CD4-positive, alpha-beta T cell (primary cell): ENCODE measurements at regions of chr12 and their contacts with region 1.

Region 1: DNA sequence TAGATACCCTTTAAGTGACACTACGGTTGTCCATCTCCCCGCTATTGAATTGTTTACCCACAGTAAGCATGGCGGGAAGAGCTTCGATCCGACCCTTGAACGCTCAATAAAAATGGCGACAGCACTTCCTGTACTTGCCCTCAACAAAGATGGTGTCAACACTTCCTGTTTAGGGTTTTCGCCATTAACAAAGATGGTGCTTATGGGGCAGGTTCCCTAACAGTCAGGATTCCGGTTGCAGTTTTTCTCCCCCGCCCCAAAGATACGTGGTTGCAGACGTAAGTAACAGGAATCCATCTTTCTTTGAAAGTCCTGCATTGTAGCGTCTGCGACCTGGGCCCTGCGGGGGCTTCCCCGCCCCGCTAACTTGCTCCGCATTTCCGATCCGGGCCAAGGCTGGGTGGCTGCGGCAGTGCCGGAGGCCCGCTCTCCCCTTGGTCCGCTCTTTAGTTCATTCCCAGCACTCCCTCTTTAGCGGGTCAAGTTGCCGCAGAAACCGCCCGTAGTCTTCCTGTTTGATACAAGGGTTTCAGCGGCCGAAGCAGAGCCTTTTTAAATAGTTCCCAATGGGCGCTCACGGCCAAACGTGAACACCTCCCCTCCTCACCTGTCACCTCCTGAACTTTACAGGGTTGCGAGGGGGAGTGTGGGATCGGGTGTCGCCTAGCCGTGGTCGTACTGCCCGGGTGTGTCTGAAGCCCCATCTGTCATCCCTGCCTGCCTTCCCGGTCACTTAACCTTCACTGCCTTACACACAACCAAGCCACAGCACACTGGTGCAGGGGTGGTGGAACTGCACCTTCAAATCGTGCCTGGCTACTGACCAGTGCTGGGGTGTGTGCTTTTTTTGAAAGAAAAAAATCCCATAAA is at the start of gene CRADD:
- DNase-seq: peak; percentile 66 to 99 (median 80)
- ATAC-seq: peak; percentile 94
- H3K4me3 ChIP-seq: peak within 1 kb of the TSS; percentile 71
- H3K4me3 Mint-ChIP-seq: peak within 1 kb of the TSS; percentile 97
- H3K27ac ChIP-seq: peak within 1 kb of the TSS; percentile 97 to 98
- H3K27ac Mint-ChIP-seq: peak within 1 kb of the TSS; percentile 100
- H3K4me1 ChIP-seq: peaks cover 24% of the 10 kb centered on the region
- H3K4me1 Mint-ChIP-seq: peaks cover 40% of the 10 kb centered on the region
- H3K27me3 ChIP-seq: peaks cover 7 to 9% of the 10 kb centered on the region in 2 experiments
- H3K27me3 Mint-ChIP-seq: peaks cover 15% of the 10 kb centered on the region
- CTCF ChIP-seq: no peak
- total RNA-seq, gene CRADD: 5.8 to 9.2 TPM

Region 2: DNA sequence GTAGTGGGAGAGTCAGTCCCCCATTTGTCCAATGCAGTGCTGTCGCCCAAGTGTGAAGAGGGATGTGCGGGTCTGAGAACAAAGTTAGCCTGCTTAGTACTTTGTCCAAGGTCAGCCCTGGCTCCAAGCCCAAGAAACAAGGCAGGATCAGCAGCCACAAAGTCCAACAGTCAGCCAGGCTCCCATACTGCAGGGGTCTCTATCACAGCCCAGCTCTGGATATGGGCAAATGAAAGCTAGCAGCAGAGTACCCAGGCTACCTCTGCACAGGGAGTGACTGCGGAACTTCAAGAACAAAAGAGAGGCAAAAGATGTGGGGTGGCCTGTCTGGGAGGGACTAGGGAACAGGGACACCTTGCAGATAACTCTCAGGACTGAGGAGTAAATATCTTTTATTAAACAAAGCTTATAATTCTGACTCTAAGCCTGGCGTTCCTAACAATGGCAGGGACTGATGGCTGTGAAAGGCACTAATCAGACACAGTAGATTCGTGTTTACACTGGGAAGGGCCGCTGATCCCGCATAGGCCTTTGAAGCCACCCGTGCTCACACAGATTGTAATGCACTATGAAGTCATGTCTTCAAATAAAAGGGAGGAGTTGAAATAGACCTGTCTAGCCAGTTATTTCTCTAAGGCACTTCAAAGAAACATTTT is 657.3 kb before region 1 on chr12:
- CTCF ChIA-PET with region 1: no interaction called
- POLR2A ChIA-PET with region 1: no interaction called
- intact Hi-C with region 1: no loop called
- DNase-seq: no peak
- ATAC-seq: peak; percentile 56
- H3K4me3 ChIP-seq: no peak overlapping the region
- H3K4me3 Mint-ChIP-seq: no peak overlapping the region
- H3K27ac ChIP-seq: no peak overlapping the region
- H3K27ac Mint-ChIP-seq: no peak overlapping the region
- H3K4me1 ChIP-seq: no peaks in the 10 kb centered on the region
- H3K4me1 Mint-ChIP-seq: no peaks in the 10 kb centered on the region
- H3K27me3 ChIP-seq: no peaks in the 10 kb centered on the region
- H3K27me3 Mint-ChIP-seq: no peaks in the 10 kb centered on the region
- CTCF ChIP-seq: no peak

Region 3: GRCh38 chr12:93378373-93379325 is 298.8 kb before region 1 on chr12:
- CTCF ChIA-PET with region 1: no interaction called
- POLR2A ChIA-PET with region 1: no interaction called
- intact Hi-C with region 1: loop called (anchors 1 to 5 kb)
- DNase-seq: peak; percentile 33 to 86 (median 47)
- ATAC-seq: peak; percentile 54
- H3K4me3 ChIP-seq: peak overlapping the region; percentile 74
- H3K4me3 Mint-ChIP-seq: peak overlapping the region; percentile 100
- H3K27ac ChIP-seq: peak overlapping the region; percentile 85 to 88
- H3K27ac Mint-ChIP-seq: peak overlapping the region; percentile 99
- H3K4me1 ChIP-seq: peaks cover 36% of the 10 kb centered on the region
- H3K4me1 Mint-ChIP-seq: peaks cover 52% of the 10 kb centered on the region
- H3K27me3 ChIP-seq: no peaks in the 10 kb centered on the region
- H3K27me3 Mint-ChIP-seq: no peaks in the 10 kb centered on the region
- CTCF ChIP-seq: no peak

Region 4: GRCh38 chr12:93502802-93503623 is 174.4 kb before region 1 on chr12:
- CTCF ChIA-PET with region 1: no interaction called
- POLR2A ChIA-PET with region 1: no interaction called
- intact Hi-C with region 1: loop called in 1 of 2 experiments (anchors 10 kb)
- DNase-seq: peak; percentile 36 to 79 (median 59)
- ATAC-seq: peak; percentile 29
- H3K4me3 ChIP-seq: no peak overlapping the region
- H3K4me3 Mint-ChIP-seq: no peak overlapping the region
- H3K27ac ChIP-seq: no peak overlapping the region
- H3K27ac Mint-ChIP-seq: no peak overlapping the region
- H3K4me1 ChIP-seq: no peaks in the 10 kb centered on the region
- H3K4me1 Mint-ChIP-seq: no peaks in the 10 kb centered on the region
- H3K27me3 ChIP-seq: no peaks in the 10 kb centered on the region
- H3K27me3 Mint-ChIP-seq: no peaks in the 10 kb centered on the region
- CTCF ChIP-seq: peak; percentile 91

Region 5: DNA sequence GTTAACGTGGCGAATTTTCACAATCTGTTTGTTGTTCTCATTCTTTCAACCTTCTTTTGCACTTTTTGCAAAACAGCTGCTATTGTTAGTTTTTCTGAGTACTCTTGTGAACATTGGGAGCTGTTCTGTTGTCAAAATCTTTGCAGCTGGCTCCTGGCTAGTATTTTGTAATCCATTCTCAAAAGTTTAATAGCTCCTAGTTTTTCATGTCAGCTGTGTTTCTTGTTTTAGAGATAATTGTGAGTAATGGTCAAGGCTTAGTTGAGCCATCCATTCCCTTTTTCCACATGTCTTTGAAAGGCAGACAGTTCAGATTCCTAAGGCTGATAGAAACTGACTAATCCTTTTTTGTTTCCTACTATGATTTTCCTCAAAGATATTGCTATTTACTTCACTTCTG is 39.3 kb before region 1 on chr12:
- CTCF ChIA-PET with region 1: no interaction called
- POLR2A ChIA-PET with region 1: no interaction called
- intact Hi-C with region 1: no loop called
- DNase-seq: no peak
- ATAC-seq: no peak
- H3K4me3 ChIP-seq: no peak overlapping the region
- H3K4me3 Mint-ChIP-seq: no peak overlapping the region
- H3K27ac ChIP-seq: no peak overlapping the region
- H3K27ac Mint-ChIP-seq: no peak overlapping the region
- H3K4me1 ChIP-seq: no peaks in the 10 kb centered on the region
- H3K4me1 Mint-ChIP-seq: no peaks in the 10 kb centered on the region
- H3K27me3 ChIP-seq: peaks cover 0 to 2% of the 10 kb centered on the region in 2 experiments
- H3K27me3 Mint-ChIP-seq: peaks cover 36% of the 10 kb centered on the region
- CTCF ChIP-seq: no peak

Region 6: GRCh38 chr12:93742110-93742934 is 64.9 kb after region 1 on chr12:
- CTCF ChIA-PET with region 1: no interaction called
- POLR2A ChIA-PET with region 1: interaction called, 9 read pairs
- intact Hi-C with region 1: loop called in 1 of 2 experiments (anchors 5 kb)
- DNase-seq: peak in 13 of 14 experiments; percentile 5 to 79 (median 41)
- ATAC-seq: peak; percentile 87
- H3K4me3 ChIP-seq: peak overlapping the region; percentile 75
- H3K4me3 Mint-ChIP-seq: peak overlapping the region; percentile 93
- H3K27ac ChIP-seq: peak overlapping the region in 1 of 2 donors; percentile 49
- H3K27ac Mint-ChIP-seq: peak overlapping the region; percentile 71
- H3K4me1 ChIP-seq: peaks cover 10% of the 10 kb centered on the region
- H3K4me1 Mint-ChIP-seq: peaks cover 33% of the 10 kb centered on the region
- H3K27me3 ChIP-seq: no peaks in the 10 kb centered on the region
- H3K27me3 Mint-ChIP-seq: no peaks in the 10 kb centered on the region
- CTCF ChIP-seq: no peak

Region 7: DNA sequence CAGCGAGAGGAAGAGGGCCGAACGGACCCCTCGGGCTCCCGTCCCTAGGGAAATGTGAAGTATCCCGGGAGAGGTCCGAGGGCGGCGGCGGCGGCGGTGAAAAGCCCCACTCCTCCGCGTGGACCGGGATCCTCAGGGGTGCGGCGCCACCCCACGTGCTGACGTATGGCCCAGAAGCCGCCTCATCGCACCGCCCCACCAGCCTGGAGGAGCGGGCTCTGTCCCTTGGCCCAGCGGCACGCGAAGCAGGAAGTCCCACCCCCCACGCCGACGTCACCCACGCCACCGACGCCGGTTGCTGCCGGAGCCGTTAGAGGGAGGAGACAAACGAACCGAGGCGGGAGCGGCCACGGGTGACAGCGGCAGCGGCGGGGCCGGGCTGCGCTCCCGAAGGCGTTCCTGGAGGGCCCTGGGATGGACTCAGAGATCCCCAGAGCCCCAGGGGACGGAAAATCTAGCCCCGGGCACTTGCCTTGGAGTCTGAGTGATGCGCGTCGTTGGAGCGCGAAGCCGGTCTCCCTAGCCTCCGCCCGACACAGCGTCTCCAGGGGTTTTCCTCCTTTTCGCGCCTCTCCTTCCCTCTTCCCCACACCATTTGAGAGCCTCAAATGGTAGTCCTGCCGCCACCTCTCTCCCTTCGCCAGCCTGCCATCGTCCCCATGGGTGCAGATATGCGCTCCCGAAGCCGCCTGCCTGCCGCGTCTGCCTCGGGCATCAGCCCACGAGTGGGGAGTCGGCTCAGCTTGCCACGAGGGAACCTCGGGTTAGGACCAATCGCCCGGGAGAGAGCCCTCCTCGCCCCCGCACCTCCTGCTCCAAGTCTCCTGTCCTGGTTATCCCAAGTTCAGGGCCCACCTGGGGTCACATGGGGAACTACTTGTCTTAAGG is 782.5 kb after region 1 on chr12 and contains the start of gene CEP83:
- CTCF ChIA-PET with region 1: no interaction called
- POLR2A ChIA-PET with region 1: no interaction called
- intact Hi-C with region 1: loop called in 1 of 2 experiments (anchors 5 kb)
- DNase-seq: peak; percentile 89 to 99 (median 98)
- ATAC-seq: peak; percentile 97
- H3K4me3 ChIP-seq: peak within 1 kb of the TSS; percentile 96
- H3K4me3 Mint-ChIP-seq: peak within 1 kb of the TSS; percentile 94
- H3K27ac ChIP-seq: peak within 1 kb of the TSS; percentile 69 to 87
- H3K27ac Mint-ChIP-seq: peak within 1 kb of the TSS; percentile 92
- H3K4me1 ChIP-seq: peaks cover 10% of the 10 kb centered on the region
- H3K4me1 Mint-ChIP-seq: peaks cover 31% of the 10 kb centered on the region
- H3K27me3 ChIP-seq: no peaks in the 10 kb centered on the region
- H3K27me3 Mint-ChIP-seq: peaks cover 8% of the 10 kb centered on the region
- CTCF ChIP-seq: no peak
- total RNA-seq, gene CEP83: 9.4 to 12.1 TPM

Region 8: DNA sequence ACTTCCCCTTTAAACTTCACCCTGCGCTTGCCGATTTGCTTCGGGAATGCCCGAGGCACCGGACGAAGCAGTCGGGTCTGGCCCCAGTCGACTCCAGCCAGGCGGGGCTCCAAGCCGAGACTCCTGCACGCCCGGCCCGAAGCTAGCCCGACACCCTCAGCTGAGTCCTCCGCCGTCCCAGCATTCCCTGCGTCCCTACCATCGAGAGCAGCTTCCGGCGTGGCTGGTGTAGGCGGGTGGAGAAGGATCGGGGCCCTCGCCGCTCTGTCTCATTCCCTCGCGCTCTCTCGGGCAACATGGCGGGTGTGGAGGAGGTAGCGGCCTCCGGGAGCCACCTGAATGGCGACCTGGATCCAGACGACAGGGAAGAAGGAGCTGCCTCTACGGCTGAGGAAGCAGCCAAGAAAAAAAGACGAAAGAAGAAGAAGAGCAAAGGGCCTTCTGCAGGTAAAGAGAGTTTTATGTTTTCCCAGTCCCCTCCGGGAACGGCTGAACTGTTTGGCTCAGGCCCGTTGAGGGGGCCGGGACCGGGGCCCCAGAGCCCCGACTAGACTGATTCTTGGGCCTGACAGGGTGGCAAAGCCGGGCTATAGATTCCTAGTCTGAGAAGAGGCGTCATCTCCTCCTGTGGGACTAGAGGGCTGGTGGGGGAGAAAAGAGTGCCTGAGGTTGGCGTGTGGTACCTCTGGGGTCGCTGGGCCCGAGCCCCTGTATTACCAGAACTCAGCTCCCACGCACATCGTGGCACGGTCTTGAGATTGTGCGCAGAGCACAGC is 1796.6 kb after region 1 on chr12 and contains the start of gene METAP2:
- CTCF ChIA-PET with region 1: no interaction called
- POLR2A ChIA-PET with region 1: interaction called, 3 read pairs
- intact Hi-C with region 1: loop called in 1 of 2 experiments (anchors 5 kb)
- DNase-seq: peak; percentile 82 to 95 (median 88)
- ATAC-seq: peak; percentile 96
- H3K4me3 ChIP-seq: peak within 1 kb of the TSS; percentile 92
- H3K4me3 Mint-ChIP-seq: peak within 1 kb of the TSS; percentile 100
- H3K27ac ChIP-seq: peak within 1 kb of the TSS; percentile 56 to 79
- H3K27ac Mint-ChIP-seq: peak within 1 kb of the TSS; percentile 92
- H3K4me1 ChIP-seq: peaks cover 32% of the 10 kb centered on the region
- H3K4me1 Mint-ChIP-seq: peaks cover 67% of the 10 kb centered on the region
- H3K27me3 ChIP-seq: no peaks in the 10 kb centered on the region
- H3K27me3 Mint-ChIP-seq: no peaks in the 10 kb centered on the region
- CTCF ChIP-seq: no peak
- total RNA-seq, gene METAP2: 60.2 to 66.3 TPM